ENCODE measurements at regions of chr1 and their contacts with region 1.

Region 1: DNA sequence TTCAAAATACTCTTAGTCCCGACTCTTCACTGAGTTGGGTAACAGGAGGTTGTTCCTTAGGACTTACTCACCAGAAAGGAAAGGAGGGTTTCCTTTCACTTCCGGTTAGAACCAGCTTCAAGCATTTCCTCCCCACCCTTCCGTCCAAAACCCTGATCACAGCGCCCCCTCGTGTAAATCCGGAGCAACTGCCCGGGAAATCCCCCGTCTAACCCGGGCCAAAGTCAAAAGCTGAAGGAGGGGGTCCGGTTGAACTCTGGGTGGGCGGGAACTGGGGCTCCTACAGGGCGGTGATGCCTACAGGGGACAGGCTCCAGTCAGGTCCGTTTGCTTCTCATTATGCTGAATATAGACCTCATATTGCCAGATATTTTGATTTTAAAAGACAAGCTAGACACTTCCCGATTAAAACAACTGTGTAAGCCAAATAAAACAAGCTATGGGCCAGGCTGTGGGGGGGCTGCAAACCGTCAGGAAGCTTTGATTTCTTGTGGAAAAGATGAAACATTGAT is 15.0 kb upstream of the MTARC2 start:
- DNase-seq: peak; percentile 54
- H3K4me3 ChIP-seq: peak overlapping the region; percentile 10; the same call in 1 of the 2 replicates
- H3K27ac ChIP-seq: no peak overlapping the region
- H3K27me3 ChIP-seq: no peaks in the 10 kb centered on the region
- CTCF ChIP-seq: peak; percentile 74

Region 2: DNA sequence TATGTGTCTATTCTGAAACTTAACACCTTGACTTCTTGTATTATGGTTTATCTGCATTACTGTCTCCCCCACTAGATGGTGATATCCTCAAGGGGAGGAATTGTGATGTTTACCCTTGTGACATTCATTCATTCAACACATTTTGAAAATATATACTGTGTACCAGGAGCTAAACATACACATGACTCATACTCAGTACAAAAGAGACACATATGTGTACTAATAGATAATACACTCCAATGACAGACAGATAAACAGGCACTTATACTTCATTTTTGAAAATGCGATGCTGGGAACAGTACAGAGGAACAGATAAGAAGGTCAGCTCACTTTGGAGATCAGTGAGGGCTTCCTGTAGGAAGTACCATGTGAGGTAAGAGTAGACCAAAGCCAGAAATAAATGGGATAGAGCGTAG is 452.0 kb before region 1 on chr1:
- CTCF ChIA-PET with region 1: interaction called, 46 read pairs
- POLR2A ChIA-PET with region 1: no interaction called
- DNase-seq: no peak
- H3K4me3 ChIP-seq: no peak overlapping the region
- H3K27ac ChIP-seq: no peak overlapping the region
- H3K27me3 ChIP-seq: peaks cover 18% of the 10 kb centered on the region
- CTCF ChIP-seq: peak; percentile 72

Region 3: GRCh38 chr1:220579317-220579716 is 153.8 kb before region 1 on chr1:
- CTCF ChIA-PET with region 1: no interaction called
- POLR2A ChIA-PET with region 1: no interaction called
- DNase-seq: no peak
- H3K4me3 ChIP-seq: no peak overlapping the region
- H3K27ac ChIP-seq: no peak overlapping the region
- H3K27me3 ChIP-seq: no peaks in the 10 kb centered on the region
- CTCF ChIP-seq: no peak

Region 4: DNA sequence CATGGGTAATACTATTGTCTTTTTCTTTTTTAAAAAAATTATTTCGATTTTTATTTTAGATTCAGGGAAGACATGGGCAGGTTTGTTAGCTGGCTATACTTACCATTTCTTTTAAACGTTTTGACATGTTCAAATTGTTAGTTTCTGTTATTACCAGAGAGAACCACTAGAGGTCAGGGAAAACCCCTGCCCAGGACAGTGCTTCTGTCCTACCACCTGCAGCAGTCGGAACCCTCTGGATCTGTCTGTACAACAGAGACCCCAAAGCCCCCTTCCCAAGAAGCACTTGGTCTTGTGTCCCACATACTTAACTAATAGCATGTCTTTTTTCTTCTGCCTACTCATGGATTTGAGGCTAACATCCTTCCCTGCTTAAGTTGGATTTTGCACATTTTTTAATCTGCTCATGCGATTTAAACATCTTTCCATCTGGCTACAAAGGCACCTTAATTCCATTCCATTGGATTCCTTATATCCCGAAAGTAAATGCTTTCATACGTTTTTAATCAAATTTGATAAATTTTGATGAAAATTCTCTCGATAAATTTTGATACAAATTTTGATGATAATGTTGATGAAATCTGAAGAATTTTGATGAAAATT is 53.0 kb before region 1 on chr1:
- CTCF ChIA-PET with region 1: interaction called, 30 read pairs
- POLR2A ChIA-PET with region 1: no interaction called
- DNase-seq: no peak
- H3K4me3 ChIP-seq: no peak overlapping the region
- H3K27ac ChIP-seq: no peak overlapping the region
- H3K27me3 ChIP-seq: no peaks in the 10 kb centered on the region
- CTCF ChIP-seq: peak; percentile 80

Region 5: DNA sequence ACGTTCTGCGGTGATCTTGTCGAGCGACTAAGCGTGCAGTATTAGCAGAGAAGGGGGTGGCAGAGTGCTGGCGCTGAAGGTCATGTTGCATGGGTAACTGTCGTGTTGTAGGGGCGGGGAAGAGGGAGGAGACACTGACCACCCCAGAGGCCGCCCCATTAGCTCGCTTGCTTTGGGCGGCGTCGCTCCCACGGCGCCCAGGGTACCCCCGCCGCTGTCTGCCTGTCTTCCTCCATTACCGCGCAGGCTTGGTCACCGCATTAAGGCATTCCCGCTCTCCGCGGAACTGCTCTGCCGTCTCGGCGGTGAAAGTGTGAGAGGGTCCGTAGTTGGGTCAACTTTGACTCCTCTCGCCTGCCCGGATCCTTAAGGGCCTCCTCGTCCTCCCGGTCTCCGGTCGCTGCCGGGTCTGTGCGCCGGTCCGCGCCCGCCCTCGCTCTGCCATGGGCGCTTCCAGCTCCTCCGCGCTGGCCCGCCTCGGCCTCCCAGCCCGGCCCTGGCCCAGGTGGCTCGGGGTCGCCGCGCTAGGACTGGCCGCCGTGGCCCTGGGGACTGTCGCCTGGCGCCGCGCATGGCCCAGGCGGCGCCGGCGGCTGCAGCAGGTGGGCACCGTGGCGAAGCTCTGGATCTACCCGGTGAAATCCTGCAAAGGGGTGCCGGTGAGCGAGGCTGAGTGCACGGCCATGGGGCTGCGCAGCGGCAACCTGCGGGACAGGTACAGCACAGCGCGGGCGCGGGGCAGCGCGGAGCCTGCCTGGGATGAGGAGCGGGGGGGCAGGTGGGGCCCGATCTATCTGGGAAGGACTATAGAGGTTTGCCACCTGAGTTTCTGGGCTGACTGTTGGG is 15.2 kb after region 1 on chr1 and contains the start of gene MTARC2:
- CTCF ChIA-PET with region 1: interaction called, 53 read pairs
- POLR2A ChIA-PET with region 1: interaction called, 3 read pairs
- DNase-seq: peak; percentile 8
- H3K4me3 ChIP-seq: peak within 1 kb of the TSS; percentile 72
- H3K27ac ChIP-seq: no peak within 1 kb of the TSS
- H3K27me3 ChIP-seq: peaks cover 4% of the 10 kb centered on the region
- CTCF ChIP-seq: no peak
- polyA plus RNA-seq, gene MTARC2: 2.8 and 2.9 TPM in 2 replicates

Region 6: DNA sequence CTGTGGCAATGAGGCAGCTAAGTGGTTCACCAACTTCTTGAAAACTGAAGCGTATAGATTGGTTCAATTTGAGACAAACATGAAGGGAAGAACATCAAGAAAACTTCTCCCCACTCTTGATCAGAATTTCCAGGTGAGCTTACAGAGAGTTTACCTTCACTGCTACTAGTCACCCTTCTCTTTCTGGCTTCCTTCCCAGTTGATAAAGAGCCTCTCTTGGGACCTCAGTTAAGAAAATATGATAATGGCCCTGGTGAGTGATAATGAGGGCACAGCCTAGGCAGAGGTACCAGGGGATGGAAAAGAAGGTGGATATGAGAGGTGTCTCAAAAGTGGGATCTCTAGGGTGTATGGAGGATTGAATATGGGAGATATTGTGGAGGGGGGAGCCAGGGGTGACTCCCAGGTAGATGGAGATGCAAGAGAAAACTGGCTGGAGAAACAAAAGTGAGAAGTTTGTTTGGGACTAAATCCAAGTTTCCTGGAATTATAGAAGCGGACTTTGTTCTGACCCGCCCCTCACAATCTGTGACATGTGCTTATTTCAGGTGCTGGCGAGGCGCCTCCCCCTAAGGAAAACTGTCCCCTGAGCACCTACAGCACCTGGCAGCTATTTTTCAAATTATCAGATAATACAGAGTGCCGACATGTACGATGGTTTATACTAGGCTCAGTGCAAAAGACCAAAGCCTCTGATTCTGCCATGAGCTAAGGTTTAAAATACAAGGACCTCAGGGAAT is 28.7 kb after region 1 on chr1:
- CTCF ChIA-PET with region 1: interaction called, 23 read pairs
- POLR2A ChIA-PET with region 1: no interaction called
- DNase-seq: no peak
- H3K4me3 ChIP-seq: no peak overlapping the region
- H3K27ac ChIP-seq: no peak overlapping the region
- H3K27me3 ChIP-seq: no peaks in the 10 kb centered on the region
- CTCF ChIP-seq: no peak

Region 7: GRCh38 chr1:220786337-220787068 is 53.4 kb after region 1 on chr1 and contains the start of gene MTARC1:
- CTCF ChIA-PET with region 1: interaction called, 15 read pairs
- POLR2A ChIA-PET with region 1: no interaction called
- DNase-seq: no peak
- H3K4me3 ChIP-seq: peak within 1 kb of the TSS; percentile 52
- H3K27ac ChIP-seq: no peak within 1 kb of the TSS
- H3K27me3 ChIP-seq: no peaks in the 10 kb centered on the region
- CTCF ChIP-seq: 0 out of 2 replicates have a peak, but pooled peaks have one; percentile 10
- polyA plus RNA-seq, gene MTARC1: 2.1 and 2.6 TPM in 2 replicates